Posterior cingulate gyrus (tissue), 11 donors: ENCODE measurements at regions of chr14 and their contacts with region 1.

Region 1: GRCh38 chr14:71753126-71753830 is 179.0 kb upstream of the RGS6 start:
- DNase-seq: peak; percentile 69 to 98 (median 86)

Region 2: GRCh38 chr14:71138448-71139293 is 614.6 kb before region 1 on chr14:
- intact Hi-C with region 1: loop called (anchors 1 kb)
- DNase-seq: peak; percentile 22 to 94 (median 62)